PC-9 (cell line): ENCODE measurements at regions of chr12 and their contacts with region 1.

Region 1: DNA sequence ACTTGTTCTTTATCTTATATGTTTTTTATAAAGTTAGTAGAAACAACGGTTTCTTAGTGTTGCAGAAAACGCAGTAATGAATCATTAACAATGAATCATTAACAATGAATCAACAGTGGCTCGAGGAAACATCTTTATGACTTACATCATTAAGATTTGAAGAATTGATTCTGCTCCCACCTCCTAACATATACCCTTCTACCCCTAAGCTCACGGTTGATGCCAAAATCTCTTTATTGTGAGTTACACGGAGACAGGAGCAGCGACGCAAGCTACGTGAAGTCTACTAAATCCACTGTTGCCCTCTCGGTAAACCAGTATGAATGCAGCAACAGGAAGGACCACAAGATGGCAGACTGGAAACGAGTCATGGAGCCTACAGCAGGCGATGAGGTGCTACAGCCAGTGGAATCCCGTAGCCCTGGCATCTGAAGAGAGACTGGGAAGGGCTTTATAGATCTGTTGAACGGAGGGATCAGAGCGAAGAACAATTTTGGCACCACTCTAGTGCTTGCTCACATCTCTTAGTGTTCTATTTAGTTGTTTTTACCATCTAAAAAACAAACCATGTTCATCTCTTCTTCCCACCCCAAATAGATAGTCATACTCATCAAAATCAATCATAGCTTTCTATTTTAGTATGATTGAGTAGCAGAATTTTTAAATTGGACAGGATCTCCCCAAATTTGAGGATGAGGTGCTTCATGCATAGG is 332.7 kb downstream of the DUSP6 start:
- DNase-seq: peak; percentile 68 to 71
- H3K4me3 ChIP-seq: peak overlapping the region; percentile 51
- H3K27ac ChIP-seq: no peak overlapping the region
- H3K4me1 ChIP-seq: peaks cover 10% of the 10 kb centered on the region; the same call in 1 of the 2 replicates
- H3K27me3 ChIP-seq: no peaks in the 10 kb centered on the region
- CTCF ChIP-seq: peak; percentile 92

Region 2: GRCh38 chr12:88141770-88142609 is 877.6 kb before region 1 on chr12 and contains the starts of genes CEP290 and TMTC3:
- CTCF ChIA-PET with region 1: no interaction called
- POLR2A ChIA-PET with region 1: no interaction called
- intact Hi-C with region 1: loop called (anchors 5 kb)
- DNase-seq: peak; percentile 93 to 99
- H3K4me3 ChIP-seq: peak within 1 kb of the TSS; percentile 93
- H3K27ac ChIP-seq: peak within 1 kb of the TSS; percentile 59
- H3K4me1 ChIP-seq: peaks cover 13% of the 10 kb centered on the region
- H3K27me3 ChIP-seq: no peaks in the 10 kb centered on the region
- CTCF ChIP-seq: no peak
- total RNA-seq, gene CEP290: 21.9 and 22.2 TPM in 2 replicates
- total RNA-seq, gene TMTC3: 23.3 and 26.4 TPM in 2 replicates

Region 3: GRCh38 chr12:88946372-88946997 is 73.1 kb before region 1 on chr12:
- CTCF ChIA-PET with region 1: no interaction called
- POLR2A ChIA-PET with region 1: no interaction called
- intact Hi-C with region 1: no loop called
- DNase-seq: no peak
- H3K4me3 ChIP-seq: no peak overlapping the region
- H3K27ac ChIP-seq: no peak overlapping the region
- H3K4me1 ChIP-seq: peaks cover 6% of the 10 kb centered on the region; the same call in 1 of the 2 replicates
- H3K27me3 ChIP-seq: no peaks in the 10 kb centered on the region
- CTCF ChIP-seq: no peak

Region 4: GRCh38 chr12:89051065-89051677 is 31.6 kb after region 1 on chr12:
- CTCF ChIA-PET with region 1: no interaction called
- POLR2A ChIA-PET with region 1: no interaction called
- intact Hi-C with region 1: loop called (anchors 2 kb)
- DNase-seq: peak; percentile 18 to 53
- H3K4me3 ChIP-seq: no peak overlapping the region
- H3K27ac ChIP-seq: no peak overlapping the region
- H3K4me1 ChIP-seq: no peaks in the 10 kb centered on the region
- H3K27me3 ChIP-seq: no peaks in the 10 kb centered on the region
- CTCF ChIP-seq: peak; percentile 97

Region 5: GRCh38 chr12:89461649-89462612 is 442.4 kb after region 1 on chr12:
- CTCF ChIA-PET with region 1: interaction called, 4 read pairs
- POLR2A ChIA-PET with region 1: no interaction called
- intact Hi-C with region 1: loop called (anchors 1 kb)
- DNase-seq: peak in 1 of 2 experiments; percentile 66
- H3K4me3 ChIP-seq: peak overlapping the region; percentile 28; the same call in 1 of the 2 replicates
- H3K27ac ChIP-seq: peak overlapping the region; percentile 17; the same call in 1 of the 2 replicates
- H3K4me1 ChIP-seq: peaks cover 4% of the 10 kb centered on the region
- H3K27me3 ChIP-seq: no peaks in the 10 kb centered on the region
- CTCF ChIP-seq: peak; percentile 77

Region 6: GRCh38 chr12:89529738-89530137 is 510.2 kb after region 1 on chr12:
- CTCF ChIA-PET with region 1: no interaction called
- POLR2A ChIA-PET with region 1: no interaction called
- intact Hi-C with region 1: loop called (anchors 1 kb)
- DNase-seq: peak in 1 of 2 experiments; percentile 56
- H3K4me3 ChIP-seq: no peak overlapping the region
- H3K27ac ChIP-seq: no peak overlapping the region
- H3K4me1 ChIP-seq: peaks cover 8% of the 10 kb centered on the region
- H3K27me3 ChIP-seq: no peaks in the 10 kb centered on the region
- CTCF ChIP-seq: peak; percentile 69